ENCODE measurements at regions of chr6 and their contacts with region 1.

Region 1: GRCh38 chr6:7604506-7604905 is 14.5 kb downstream of the SNRNP48 start:
- DNase-seq: no peak
- H3K4me3 ChIP-seq: no peak overlapping the region
- H3K4me3 Mint-ChIP-seq: no peak overlapping the region
- H3K27ac ChIP-seq: no peak overlapping the region
- H3K27ac Mint-ChIP-seq: peak overlapping the region in 3 of 7 donors; percentile 4 to 46 (median 11)
- H3K4me1 ChIP-seq: no peaks in the 10 kb centered on the region
- H3K4me1 Mint-ChIP-seq: no peaks in the 10 kb centered on the region
- H3K27me3 ChIP-seq: no peaks in the 10 kb centered on the region
- H3K27me3 Mint-ChIP-seq: no peaks in the 10 kb centered on the region

Region 2: DNA sequence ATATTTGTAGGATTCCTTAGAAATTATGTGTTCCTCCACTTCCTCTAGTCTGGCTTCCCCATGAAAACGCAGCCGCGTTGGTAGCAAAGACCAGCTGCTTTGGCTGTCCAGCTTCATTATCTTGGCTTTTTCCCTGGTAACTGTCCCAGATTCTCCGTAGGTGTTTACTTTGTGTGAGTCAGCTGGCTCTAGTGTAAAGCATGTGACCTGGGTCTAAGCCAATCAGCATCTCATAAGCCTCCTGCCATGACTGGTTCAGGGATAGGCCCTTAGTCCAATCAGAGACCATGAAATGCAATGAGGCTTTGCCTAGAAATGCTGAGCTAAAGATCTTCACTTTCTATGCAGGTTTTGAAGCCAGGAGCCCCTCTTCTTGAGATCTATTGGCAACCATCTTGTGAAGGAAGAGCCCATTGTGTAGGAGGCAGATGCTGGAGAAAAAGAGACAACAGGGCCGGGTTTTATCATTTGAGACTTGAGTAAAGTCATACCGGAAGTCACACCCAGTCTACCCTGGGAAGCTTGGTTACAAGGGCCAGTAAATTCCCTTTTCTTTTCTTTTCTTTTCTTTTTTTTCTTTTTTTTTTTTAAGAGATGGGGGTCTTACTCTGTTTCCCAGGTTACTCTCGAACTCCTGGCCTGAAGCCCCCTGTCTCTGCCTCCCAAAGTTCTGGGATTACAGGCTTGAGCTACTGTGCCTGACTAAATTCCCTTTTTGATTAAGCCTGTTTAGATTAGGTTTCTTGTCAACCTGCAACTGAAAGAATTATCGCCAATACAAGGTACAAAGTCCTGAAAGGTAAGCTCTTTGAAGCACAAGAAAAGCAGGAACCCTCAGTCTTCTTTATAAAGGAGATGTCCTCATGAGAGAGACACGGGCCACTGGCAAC is 753.2 kb before region 1 on chr6:
- CTCF ChIA-PET with region 1: no interaction called
- POLR2A ChIA-PET with region 1: no interaction called
- intact Hi-C with region 1: no loop called
- DNase-seq: no peak
- H3K4me3 ChIP-seq: no peak overlapping the region
- H3K4me3 Mint-ChIP-seq: no peak overlapping the region
- H3K27ac ChIP-seq: no peak overlapping the region
- H3K27ac Mint-ChIP-seq: peak overlapping the region in 1 of 7 donors; percentile 9
- H3K4me1 ChIP-seq: peaks cover 4% of the 10 kb centered on the region
- H3K4me1 Mint-ChIP-seq: peaks cover 3 to 7% (median 5%) of the 10 kb centered on the region in 4 donors
- H3K27me3 ChIP-seq: no peaks in the 10 kb centered on the region
- H3K27me3 Mint-ChIP-seq: peaks cover 2 to 6% of the 10 kb centered on the region in 2 donors

Region 3: DNA sequence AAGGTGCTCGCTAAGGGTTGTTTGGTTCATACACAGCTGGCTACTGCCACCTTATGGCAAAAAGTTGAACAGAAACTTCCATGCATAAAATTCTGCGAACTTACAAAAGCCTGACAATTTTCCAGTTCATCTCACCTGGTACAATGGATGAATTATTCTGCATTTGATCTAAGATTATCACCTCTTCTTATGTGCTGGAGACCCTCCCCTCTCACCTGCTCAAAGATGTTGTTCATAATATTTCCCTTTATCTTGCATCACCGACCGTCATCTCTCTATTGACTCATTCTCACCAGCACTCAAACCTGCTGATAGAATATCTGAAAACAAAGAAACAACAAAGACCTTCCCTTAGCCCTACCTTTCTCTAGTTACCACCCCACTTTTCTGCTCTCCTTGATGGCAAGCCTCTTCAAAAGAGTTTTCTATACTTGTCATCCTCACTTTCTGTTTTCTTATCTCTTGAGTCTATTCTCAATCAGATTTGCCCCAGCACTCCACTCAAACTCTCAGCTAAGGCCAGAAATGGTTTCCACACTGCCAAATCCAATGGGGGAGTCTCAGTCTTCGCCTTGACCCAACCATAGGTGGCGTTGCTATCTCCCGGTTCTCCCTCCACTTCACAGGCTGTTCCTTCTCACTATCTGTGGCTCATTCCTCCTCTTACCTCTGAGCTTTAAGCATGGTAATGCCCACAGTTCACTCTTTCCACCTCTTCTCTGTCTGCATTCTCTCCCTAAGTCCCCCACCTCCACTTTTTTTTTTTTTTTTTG is 11.3 kb after region 1 on chr6:
- CTCF ChIA-PET with region 1: interaction called, 15 read pairs
- POLR2A ChIA-PET with region 1: no interaction called
- intact Hi-C with region 1: no loop called
- DNase-seq: peak in 4 of 5 donors; percentile 34 to 43 (median 40)
- H3K4me3 ChIP-seq: no peak overlapping the region
- H3K4me3 Mint-ChIP-seq: peak overlapping the region; percentile 1 to 63 (median 16)
- H3K27ac ChIP-seq: no peak overlapping the region
- H3K27ac Mint-ChIP-seq: peak overlapping the region in 2 of 7 donors; percentile 13 to 71
- H3K4me1 ChIP-seq: peaks cover 4% of the 10 kb centered on the region
- H3K4me1 Mint-ChIP-seq: peaks cover 5 to 7% (median 6%) of the 10 kb centered on the region in 4 donors
- H3K27me3 ChIP-seq: no peaks in the 10 kb centered on the region
- H3K27me3 Mint-ChIP-seq: peaks cover 0 to 3% of the 10 kb centered on the region in 2 donors